AG04450 (cell line): ENCODE measurements at regions of chr21 and their contacts with region 1.

Region 1: GRCh38 chr21:29164325-29164942 is 34.0 kb downstream of the MAP3K7CL start:
- DNase-seq: no peak
- H3K4me3 ChIP-seq: no peak overlapping the region
- H3K27ac ChIP-seq: no peak overlapping the region
- H3K27me3 ChIP-seq: no peaks in the 10 kb centered on the region
- CTCF ChIP-seq: peak; percentile 85

Region 2: DNA sequence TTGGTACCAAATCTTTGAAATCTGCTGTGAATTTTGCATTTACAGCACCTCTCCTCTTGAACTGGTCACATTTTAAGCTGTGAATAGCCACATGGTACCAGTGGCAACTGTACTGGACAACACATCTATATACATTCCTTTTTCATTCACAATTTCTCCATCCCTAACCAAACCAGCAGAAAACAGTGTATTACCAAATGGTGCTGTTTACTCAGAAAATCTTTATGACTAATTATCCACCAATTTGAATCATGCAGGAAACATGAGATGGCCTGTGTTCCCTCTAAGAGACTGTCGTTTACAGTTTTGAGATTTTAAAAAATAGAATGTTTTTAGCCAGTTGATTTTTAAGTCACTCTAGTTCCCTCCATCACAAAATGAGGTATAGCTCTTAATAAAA is 73.4 kb before region 1 on chr21:
- CTCF ChIA-PET with region 1: interaction called, 32 read pairs
- POLR2A ChIA-PET with region 1: no interaction called
- DNase-seq: peak; percentile 37
- H3K4me3 ChIP-seq: no peak overlapping the region
- H3K27ac ChIP-seq: peak overlapping the region; percentile 55
- H3K27me3 ChIP-seq: no peaks in the 10 kb centered on the region
- CTCF ChIP-seq: no peak

Region 3: DNA sequence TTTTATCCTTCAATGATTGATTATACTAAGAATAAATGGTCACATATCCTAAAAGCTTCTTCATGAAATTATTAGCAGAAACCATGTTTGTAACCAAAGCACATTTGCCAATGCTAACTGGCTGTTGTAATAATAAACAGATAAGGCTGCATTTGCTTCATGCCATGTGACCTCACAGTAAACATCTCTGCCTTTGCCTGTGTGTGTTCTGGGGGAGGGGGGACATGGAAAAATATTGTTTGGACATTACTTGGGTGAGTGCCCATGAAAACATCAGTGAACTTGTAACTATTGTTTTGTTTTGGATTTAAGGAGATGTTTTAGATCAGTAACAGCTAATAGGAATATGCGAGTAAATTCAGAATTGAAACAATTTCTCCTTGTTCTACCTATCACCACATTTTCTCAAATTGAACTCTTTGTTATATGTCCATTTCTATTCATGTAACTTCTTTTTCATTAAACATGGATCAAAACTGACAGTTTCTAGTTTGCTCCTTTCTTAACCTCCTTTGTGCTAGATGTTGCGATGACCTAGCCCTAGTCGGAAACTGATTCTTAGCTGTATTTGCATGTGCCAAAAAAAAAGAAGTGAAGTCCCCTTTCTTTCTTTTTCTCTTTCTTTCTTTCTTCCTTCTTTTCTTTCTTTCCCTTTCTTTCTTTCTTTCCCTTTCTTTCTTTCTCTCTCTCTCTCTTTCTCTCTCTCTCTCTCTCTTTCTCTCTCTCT is 11.1 kb after region 1 on chr21:
- CTCF ChIA-PET with region 1: interaction called, 34 read pairs
- POLR2A ChIA-PET with region 1: no interaction called
- DNase-seq: no peak
- H3K4me3 ChIP-seq: no peak overlapping the region
- H3K27ac ChIP-seq: no peak overlapping the region
- H3K27me3 ChIP-seq: no peaks in the 10 kb centered on the region
- CTCF ChIP-seq: no peak

Region 4: GRCh38 chr21:29318354-29318753 is 153.9 kb after region 1 on chr21:
- CTCF ChIA-PET with region 1: interaction called, 11 read pairs
- POLR2A ChIA-PET with region 1: no interaction called
- DNase-seq: no peak
- H3K4me3 ChIP-seq: no peak overlapping the region
- H3K27ac ChIP-seq: no peak overlapping the region
- H3K27me3 ChIP-seq: no peaks in the 10 kb centered on the region
- CTCF ChIP-seq: no peak

Region 5: GRCh38 chr21:29342363-29342957 is 178.0 kb after region 1 on chr21:
- CTCF ChIA-PET with region 1: interaction called, 45 read pairs
- POLR2A ChIA-PET with region 1: interaction called, 5 read pairs
- DNase-seq: peak; percentile 97
- H3K4me3 ChIP-seq: peak overlapping the region; percentile 27
- H3K27ac ChIP-seq: peak overlapping the region; percentile 93
- H3K27me3 ChIP-seq: no peaks in the 10 kb centered on the region
- CTCF ChIP-seq: peak; percentile 21; the same call in 1 of the 2 replicates

Region 6: GRCh38 chr21:29372063-29372802 is 207.8 kb after region 1 on chr21:
- CTCF ChIA-PET with region 1: interaction called, 88 read pairs
- POLR2A ChIA-PET with region 1: no interaction called
- DNase-seq: peak; percentile 66
- H3K4me3 ChIP-seq: no peak overlapping the region
- H3K27ac ChIP-seq: no peak overlapping the region
- H3K27me3 ChIP-seq: no peaks in the 10 kb centered on the region
- CTCF ChIP-seq: peak; percentile 70